ENCODE measurements at regions of chr5 and their contacts with region 1.

Region 1: GRCh38 chr5:53481887-53482716 is 1.7 kb downstream of the FST start:
- DNase-seq: peak; percentile 70 to 77
- H3K4me3 ChIP-seq: peak overlapping the region; percentile 32
- H3K4me3 Mint-ChIP-seq: peak overlapping the region; percentile 75
- H3K27ac Mint-ChIP-seq: no peak overlapping the region
- H3K4me1 ChIP-seq: peaks cover 10% of the 10 kb centered on the region
- H3K4me1 Mint-ChIP-seq: peaks cover 18% of the 10 kb centered on the region
- H3K27me3 ChIP-seq: peaks cover 4% of the 10 kb centered on the region
- H3K27me3 Mint-ChIP-seq: peaks cover 12% of the 10 kb centered on the region
- CTCF ChIP-seq: peak in 1 of 2 experiments; percentile 16

Region 2: DNA sequence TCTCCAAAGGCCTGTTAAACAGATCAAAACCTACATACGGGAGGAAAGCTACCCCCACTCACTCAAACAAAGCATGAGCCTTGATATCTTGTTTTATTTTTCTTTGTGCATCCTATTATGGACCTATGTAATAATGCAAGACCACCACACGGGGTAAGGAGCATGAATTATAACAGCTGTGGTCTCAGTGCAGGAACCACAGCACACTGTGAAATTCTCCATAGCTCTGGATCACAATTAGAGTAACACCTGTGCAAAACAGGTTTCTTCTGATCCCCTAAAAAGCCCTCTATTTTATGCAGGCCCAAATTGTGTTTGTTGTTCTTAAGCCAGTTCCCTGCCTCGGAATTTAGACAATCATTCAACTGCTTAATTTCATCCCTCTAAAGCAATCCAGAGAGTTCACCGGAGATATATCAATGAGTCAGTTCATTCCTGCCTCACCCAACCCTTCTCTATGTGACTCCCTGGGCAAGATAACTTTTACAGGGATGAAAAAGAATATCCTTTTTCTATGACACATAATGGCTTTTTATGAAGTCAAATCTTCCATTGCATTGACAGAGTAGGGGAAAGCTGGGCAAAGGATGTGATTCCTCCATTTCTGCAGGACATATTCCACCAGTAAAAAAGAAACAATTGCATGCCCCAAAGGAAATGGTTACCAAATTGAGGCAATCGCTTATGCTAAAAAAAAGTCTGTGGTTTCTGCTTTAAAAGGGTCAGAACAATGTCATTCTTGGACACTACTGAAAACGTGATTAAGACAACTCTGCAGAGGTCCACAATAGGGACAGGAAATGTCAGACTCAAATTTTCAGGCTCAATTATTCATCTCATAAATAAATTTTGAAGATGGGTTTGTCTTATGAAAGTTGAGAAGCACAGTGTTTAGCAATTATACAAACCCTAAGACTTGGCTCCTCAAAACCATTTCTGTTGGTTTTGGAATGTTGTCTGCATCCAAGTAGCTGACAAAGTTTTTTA is 43.3 kb before region 1 on chr5:
- CTCF ChIA-PET with region 1: no interaction called
- POLR2A ChIA-PET with region 1: no interaction called
- intact Hi-C with region 1: no loop called
- DNase-seq: no peak
- H3K4me3 ChIP-seq: no peak overlapping the region
- H3K4me3 Mint-ChIP-seq: no peak overlapping the region
- H3K27ac Mint-ChIP-seq: no peak overlapping the region
- H3K4me1 ChIP-seq: peaks cover 4% of the 10 kb centered on the region; the same call in 1 of the 2 replicates
- H3K4me1 Mint-ChIP-seq: peaks cover 7% of the 10 kb centered on the region
- H3K27me3 ChIP-seq: no peaks in the 10 kb centered on the region
- H3K27me3 Mint-ChIP-seq: peaks cover 2% of the 10 kb centered on the region
- CTCF ChIP-seq: no peak

Region 3: DNA sequence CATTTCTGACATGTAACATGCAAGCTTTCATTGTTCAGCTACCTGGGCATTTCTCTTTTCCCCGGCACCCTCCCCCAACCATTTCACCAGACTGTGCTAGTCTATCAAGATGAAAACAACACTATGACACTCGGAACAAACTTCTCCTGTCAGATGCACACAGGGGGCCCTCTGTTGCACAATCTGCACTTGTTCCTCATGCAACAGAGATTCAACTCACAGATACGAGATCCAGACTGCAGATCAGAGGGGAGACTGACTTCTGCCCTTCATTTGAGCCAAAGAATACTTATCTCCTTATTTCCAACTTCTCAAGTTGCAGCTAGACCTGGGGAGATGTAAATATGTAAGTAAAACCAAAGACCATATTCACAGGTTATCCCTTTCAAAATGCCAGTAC is 17.4 kb before region 1 on chr5:
- CTCF ChIA-PET with region 1: interaction called, 11 read pairs
- POLR2A ChIA-PET with region 1: no interaction called
- intact Hi-C with region 1: no loop called
- DNase-seq: no peak
- H3K4me3 ChIP-seq: no peak overlapping the region
- H3K4me3 Mint-ChIP-seq: no peak overlapping the region
- H3K27ac Mint-ChIP-seq: no peak overlapping the region
- H3K4me1 ChIP-seq: no peaks in the 10 kb centered on the region
- H3K4me1 Mint-ChIP-seq: no peaks in the 10 kb centered on the region
- H3K27me3 ChIP-seq: no peaks in the 10 kb centered on the region; the same call in 1 of the 2 replicates
- H3K27me3 Mint-ChIP-seq: peaks cover 4% of the 10 kb centered on the region
- CTCF ChIP-seq: no peak

Region 4: GRCh38 chr5:53575831-53576230 is 93.7 kb after region 1 on chr5:
- CTCF ChIA-PET with region 1: no interaction called
- POLR2A ChIA-PET with region 1: no interaction called
- intact Hi-C with region 1: loop called (anchors 5 kb)
- DNase-seq: no peak
- H3K4me3 ChIP-seq: no peak overlapping the region
- H3K4me3 Mint-ChIP-seq: no peak overlapping the region
- H3K27ac Mint-ChIP-seq: no peak overlapping the region
- H3K4me1 ChIP-seq: peaks cover 27% of the 10 kb centered on the region
- H3K4me1 Mint-ChIP-seq: peaks cover 35% of the 10 kb centered on the region
- H3K27me3 ChIP-seq: no peaks in the 10 kb centered on the region
- H3K27me3 Mint-ChIP-seq: no peaks in the 10 kb centered on the region
- CTCF ChIP-seq: no peak

Region 5: GRCh38 chr5:53733852-53734251 is 251.8 kb after region 1 on chr5:
- CTCF ChIA-PET with region 1: interaction called, 3 read pairs
- POLR2A ChIA-PET with region 1: no interaction called
- intact Hi-C with region 1: loop called (anchors 5 kb)
- DNase-seq: peak in 1 of 2 experiments; percentile 35
- H3K4me3 ChIP-seq: no peak overlapping the region
- H3K4me3 Mint-ChIP-seq: no peak overlapping the region
- H3K27ac Mint-ChIP-seq: no peak overlapping the region
- H3K4me1 ChIP-seq: no peaks in the 10 kb centered on the region
- H3K4me1 Mint-ChIP-seq: no peaks in the 10 kb centered on the region
- H3K27me3 ChIP-seq: no peaks in the 10 kb centered on the region
- H3K27me3 Mint-ChIP-seq: no peaks in the 10 kb centered on the region
- CTCF ChIP-seq: peak; percentile 41 to 62

Region 6: GRCh38 chr5:53874409-53874808 is 392.3 kb after region 1 on chr5:
- CTCF ChIA-PET with region 1: no interaction called
- POLR2A ChIA-PET with region 1: no interaction called
- intact Hi-C with region 1: loop called (anchors 1 kb)
- DNase-seq: peak; percentile 34 to 46
- H3K4me3 ChIP-seq: no peak overlapping the region
- H3K4me3 Mint-ChIP-seq: no peak overlapping the region
- H3K27ac Mint-ChIP-seq: no peak overlapping the region
- H3K4me1 ChIP-seq: no peaks in the 10 kb centered on the region
- H3K4me1 Mint-ChIP-seq: no peaks in the 10 kb centered on the region
- H3K27me3 ChIP-seq: no peaks in the 10 kb centered on the region
- H3K27me3 Mint-ChIP-seq: no peaks in the 10 kb centered on the region
- CTCF ChIP-seq: peak; percentile 14

Region 7: DNA sequence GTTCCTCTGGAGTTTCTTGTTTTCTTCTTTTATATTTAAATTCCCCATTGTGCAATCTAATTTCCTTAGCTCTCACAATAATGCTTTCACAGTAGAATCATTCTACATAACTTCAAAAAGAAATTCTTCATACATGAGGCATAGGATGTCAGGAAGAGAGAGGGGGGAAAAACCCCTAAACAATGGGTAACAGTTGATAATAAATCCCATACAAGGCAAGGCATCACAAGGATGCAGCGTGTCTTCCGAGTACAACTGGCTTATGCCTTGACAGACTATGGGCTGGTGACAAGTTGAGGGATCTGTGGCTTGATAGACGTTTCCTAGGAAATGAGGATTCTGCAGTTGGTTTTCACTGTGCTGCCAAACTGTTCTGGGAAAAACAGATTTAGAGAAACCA is 580.9 kb after region 1 on chr5:
- CTCF ChIA-PET with region 1: no interaction called
- POLR2A ChIA-PET with region 1: no interaction called
- intact Hi-C with region 1: loop called (anchors 5 kb)
- DNase-seq: no peak
- H3K4me3 ChIP-seq: no peak overlapping the region
- H3K4me3 Mint-ChIP-seq: no peak overlapping the region
- H3K27ac Mint-ChIP-seq: no peak overlapping the region
- H3K4me1 ChIP-seq: no peaks in the 10 kb centered on the region
- H3K4me1 Mint-ChIP-seq: no peaks in the 10 kb centered on the region
- H3K27me3 ChIP-seq: no peaks in the 10 kb centered on the region
- H3K27me3 Mint-ChIP-seq: no peaks in the 10 kb centered on the region
- CTCF ChIP-seq: no peak

Region 8: GRCh38 chr5:54217826-54218503 is 735.9 kb after region 1 on chr5:
- CTCF ChIA-PET with region 1: no interaction called
- POLR2A ChIA-PET with region 1: no interaction called
- intact Hi-C with region 1: loop called (anchors 5 kb)
- DNase-seq: peak in 1 of 2 experiments; percentile 63
- H3K4me3 ChIP-seq: no peak overlapping the region
- H3K4me3 Mint-ChIP-seq: no peak overlapping the region
- H3K27ac Mint-ChIP-seq: no peak overlapping the region
- H3K4me1 ChIP-seq: no peaks in the 10 kb centered on the region; the same call in 1 of the 2 replicates
- H3K4me1 Mint-ChIP-seq: peaks cover 27% of the 10 kb centered on the region
- H3K27me3 ChIP-seq: no peaks in the 10 kb centered on the region
- H3K27me3 Mint-ChIP-seq: no peaks in the 10 kb centered on the region
- CTCF ChIP-seq: peak; percentile 49 to 73